Motor neuron (in vitro differentiated cells): ENCODE measurements at regions of chr6 and their contacts with region 1.

Region 1: GRCh38 chr6:34154668-34155447 is 9.0 kb upstream of the GRM4 start:
- ATAC-seq: peak; percentile 74 to 97 (median 86)
- H3K4me3 ChIP-seq: peak overlapping the region in 4 of 5 donors; percentile 9 to 28 (median 23)
- H3K27ac ChIP-seq: no peak overlapping the region
- H3K4me1 ChIP-seq: peaks cover 21 to 24% of the 10 kb centered on the region in 2 donors

Region 2: GRCh38 chr6:33579828-33580714 is 574.8 kb before region 1 on chr6 and contains the start of gene BAK1:
- in situ Hi-C with region 1: loop called in 4 of 9 experiments (anchors 25 kb)
- ATAC-seq: peak; percentile 92 to 99 (median 98)
- H3K4me3 ChIP-seq: peak within 1 kb of the TSS; percentile 61 to 98 (median 91)
- H3K27ac ChIP-seq: peak within 1 kb of the TSS; percentile 75 to 87
- H3K4me1 ChIP-seq: peaks cover 11 to 12% of the 10 kb centered on the region in 2 donors
- total RNA-seq, gene BAK1: 6.6 to 24.8 (median 11.1) TPM

Region 3: DNA sequence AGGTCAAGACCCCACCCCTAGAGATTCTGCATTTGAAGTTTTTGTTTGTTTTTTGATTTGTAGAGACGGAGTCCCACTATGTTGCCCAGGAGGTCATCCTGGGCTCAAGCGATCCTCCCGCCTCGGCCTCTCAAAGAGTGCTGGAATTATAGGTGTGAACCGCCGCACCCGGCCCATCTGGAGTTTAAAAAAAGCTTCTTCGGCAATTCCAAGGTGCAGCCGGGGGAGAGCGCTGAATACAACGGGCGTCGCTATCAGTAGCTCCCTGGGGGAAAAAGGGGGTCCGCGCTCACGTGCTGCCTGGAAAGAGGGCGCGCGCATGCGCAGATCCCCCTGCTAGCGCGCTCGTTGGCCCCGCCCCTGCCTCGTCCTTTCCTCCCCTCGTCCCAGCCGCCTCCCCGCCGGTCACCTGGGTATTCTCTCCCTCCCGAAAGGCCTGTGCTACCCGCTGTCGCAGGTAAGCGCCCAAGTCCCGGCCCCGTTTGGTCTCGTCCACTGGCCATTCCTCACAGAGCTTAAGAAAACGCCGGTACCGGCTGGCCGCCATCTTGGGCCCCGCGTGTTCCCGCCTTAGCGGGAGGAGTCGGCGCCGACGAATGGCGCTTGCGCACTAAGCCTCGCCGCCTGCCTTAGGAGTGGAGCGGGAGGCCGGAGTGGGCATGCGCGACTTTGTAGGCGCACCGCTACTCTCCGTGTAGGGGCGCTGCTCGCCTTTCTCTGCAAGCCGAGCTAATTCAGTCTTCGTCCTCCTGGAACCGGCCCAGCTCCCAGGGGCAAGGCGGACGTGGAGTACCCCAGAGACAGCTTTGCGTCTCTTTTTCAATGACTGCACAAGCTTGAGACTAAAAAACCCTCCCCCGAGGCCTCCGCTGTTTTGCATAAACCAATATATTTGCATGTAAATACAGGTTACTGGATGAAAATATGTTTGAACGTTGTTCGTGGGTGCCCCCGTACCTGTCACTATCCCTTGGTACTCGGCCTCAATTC is 443.4 kb before region 1 on chr6 and contains the start of gene UQCC2:
- in situ Hi-C with region 1: loop called in 1 of 9 experiments (anchors 25 kb)
- ATAC-seq: peak; percentile 85 to 97 (median 95)
- H3K4me3 ChIP-seq: peak within 1 kb of the TSS; percentile 66 to 95 (median 87)
- H3K27ac ChIP-seq: peak within 1 kb of the TSS; percentile 98 to 99
- H3K4me1 ChIP-seq: peaks cover 16 to 23% of the 10 kb centered on the region in 2 donors
- total RNA-seq, gene UQCC2: 53.4 to 130 (median 71.2) TPM

Region 4: GRCh38 chr6:33771146-33772081 is 383.4 kb before region 1 on chr6:
- in situ Hi-C with region 1: loop called in 4 of 9 experiments (anchors 10 to 25 kb)
- ATAC-seq: peak; percentile 70 to 84 (median 81)
- H3K4me3 ChIP-seq: no peak overlapping the region
- H3K27ac ChIP-seq: no peak overlapping the region
- H3K4me1 ChIP-seq: peaks cover 31 to 42% of the 10 kb centered on the region in 2 donors

Region 5: DNA sequence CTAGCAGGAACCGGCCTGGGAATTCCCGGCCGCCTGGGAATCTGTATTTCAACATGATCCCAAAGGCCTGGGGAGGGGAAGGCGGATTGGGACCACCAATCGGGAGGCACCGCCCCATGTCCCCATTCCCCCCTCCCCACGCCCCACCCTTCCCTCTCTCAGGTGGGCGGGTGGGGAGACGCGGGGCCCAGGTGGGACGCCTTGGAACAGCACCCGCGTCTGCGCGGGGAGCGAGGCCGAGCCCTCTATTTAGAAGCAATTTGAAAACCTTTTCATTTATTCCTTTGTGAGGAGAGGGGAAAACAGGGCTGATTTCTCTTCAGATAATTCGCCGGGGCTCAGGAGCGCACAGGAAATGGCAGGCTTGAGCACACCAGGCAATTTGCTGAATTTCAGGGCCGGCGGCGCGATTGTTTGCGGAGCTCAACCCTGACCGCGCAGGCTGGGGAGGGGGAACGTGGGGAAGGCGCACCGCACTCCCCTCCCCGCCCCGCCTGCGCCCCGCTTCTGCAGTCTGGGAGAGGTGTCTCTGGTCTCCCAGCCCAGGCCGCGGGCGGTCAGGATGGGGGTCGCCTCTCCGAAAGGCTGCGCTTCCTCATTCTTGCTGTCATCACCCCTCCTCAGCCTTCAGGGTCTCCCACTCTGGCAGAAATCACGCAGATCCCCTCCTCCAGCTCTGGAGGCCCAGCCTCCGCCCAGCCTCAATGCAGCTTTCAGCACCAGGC is 179.0 kb before region 1 on chr6:
- in situ Hi-C with region 1: loop called in 1 of 9 experiments (anchors 10 kb)
- ATAC-seq: peak in 5 of 8 experiments; percentile 42 to 57 (median 44)
- H3K4me3 ChIP-seq: no peak overlapping the region
- H3K27ac ChIP-seq: no peak overlapping the region
- H3K4me1 ChIP-seq: peaks cover 0 to 8% of the 10 kb centered on the region in 2 donors

Region 6: DNA sequence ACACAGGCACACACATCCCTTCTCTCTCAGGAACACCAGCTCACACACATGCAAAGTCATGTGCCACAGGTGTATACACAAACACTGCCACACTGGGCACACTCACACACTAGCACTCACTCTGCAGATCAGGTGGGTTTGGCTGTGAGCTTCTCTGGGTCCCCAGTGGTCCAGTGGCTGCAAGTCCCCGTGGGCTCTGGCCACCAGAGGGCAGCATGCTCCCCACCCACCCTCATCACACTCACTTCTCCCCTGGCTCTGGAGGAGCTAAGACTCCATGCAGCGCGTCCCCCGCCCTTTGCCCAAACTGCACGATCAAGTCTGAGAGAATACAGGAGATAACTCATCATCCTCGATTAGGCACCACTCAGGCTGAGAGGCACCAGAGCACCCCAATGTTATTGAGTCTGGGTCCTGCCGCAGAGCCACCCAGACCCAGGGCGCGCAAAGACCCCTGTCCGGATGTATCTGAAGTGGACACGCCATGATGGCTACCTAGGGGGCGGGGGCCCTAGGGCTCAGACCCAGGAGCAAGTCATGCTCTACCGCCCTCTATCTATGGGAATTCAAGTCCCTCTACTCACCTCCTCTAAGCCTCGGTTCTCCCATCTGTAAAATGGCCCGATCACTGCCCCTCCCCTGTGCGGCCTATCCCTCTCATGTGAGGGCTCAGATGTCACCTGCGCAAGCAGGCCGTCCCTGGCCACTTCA is 99.5 kb before region 1 on chr6:
- in situ Hi-C with region 1: loop called in 1 of 9 experiments (anchors 10 kb)
- ATAC-seq: peak; percentile 4 to 78 (median 50)
- H3K4me3 ChIP-seq: no peak overlapping the region
- H3K27ac ChIP-seq: no peak overlapping the region
- H3K4me1 ChIP-seq: peaks cover 20 to 21% of the 10 kb centered on the region in 2 donors